ENCODE measurements at regions of chr20 and their contacts with region 1.

Region 1: DNA sequence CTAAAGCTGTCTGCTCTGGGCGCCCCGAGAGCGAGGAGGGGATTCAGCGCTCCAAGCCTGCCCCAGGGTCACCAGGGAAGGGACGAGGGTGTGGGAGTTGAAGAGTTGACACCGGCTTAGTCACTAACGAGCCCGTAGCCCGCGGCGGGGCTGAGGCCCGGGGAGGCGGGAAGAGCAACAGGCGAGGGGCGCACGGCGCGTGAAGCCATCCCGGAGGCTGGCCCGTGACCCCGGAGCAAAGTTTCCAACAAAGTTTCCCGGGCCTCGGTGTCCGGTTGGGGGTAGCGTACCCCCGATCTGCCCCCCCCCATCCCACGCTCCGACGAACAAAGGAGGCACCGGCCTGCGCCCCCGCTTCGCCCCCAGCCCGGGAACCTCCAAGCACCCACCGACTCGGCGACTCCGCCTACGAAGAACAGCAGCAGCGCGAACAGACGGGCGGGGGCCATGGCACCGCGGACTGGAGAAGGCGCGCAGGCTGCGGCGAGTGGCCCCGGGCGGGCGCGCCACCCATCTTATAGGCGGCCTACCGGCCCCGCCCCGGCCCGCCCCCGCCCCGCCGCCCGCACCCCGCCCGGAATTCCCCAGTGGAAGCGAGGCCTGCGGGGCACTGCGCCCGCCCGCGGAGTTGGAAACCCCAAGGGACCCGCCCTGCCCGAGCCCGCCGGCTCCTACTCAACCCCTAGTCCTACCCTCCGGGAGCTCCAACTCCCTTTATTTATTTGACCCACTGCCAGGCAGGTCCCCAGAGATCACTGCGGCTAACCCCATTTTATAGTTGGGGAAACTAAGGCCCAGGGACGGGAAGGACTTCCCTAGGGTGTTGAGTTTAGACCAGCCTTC is at the start of gene SDC4:
- DNase-seq: peak; percentile 91
- H3K4me3 ChIP-seq: peak within 1 kb of the TSS; percentile 87 to 94 (median 90)
- H3K27ac ChIP-seq: peak within 1 kb of the TSS; percentile 94 to 99 (median 97)
- H3K4me1 ChIP-seq: peaks cover 0 to 49% (median 45%) of the 10 kb centered on the region in 4 donors
- H3K27me3 ChIP-seq: no peaks in the 10 kb centered on the region
- CTCF ChIP-seq: no peak
- EP300 ChIP-seq: no peak
- POLR2A ChIP-seq: peak; percentile 97 to 98
- total RNA-seq, gene SDC4: 79.9 to 149 (median 88.5) TPM

Region 2: DNA sequence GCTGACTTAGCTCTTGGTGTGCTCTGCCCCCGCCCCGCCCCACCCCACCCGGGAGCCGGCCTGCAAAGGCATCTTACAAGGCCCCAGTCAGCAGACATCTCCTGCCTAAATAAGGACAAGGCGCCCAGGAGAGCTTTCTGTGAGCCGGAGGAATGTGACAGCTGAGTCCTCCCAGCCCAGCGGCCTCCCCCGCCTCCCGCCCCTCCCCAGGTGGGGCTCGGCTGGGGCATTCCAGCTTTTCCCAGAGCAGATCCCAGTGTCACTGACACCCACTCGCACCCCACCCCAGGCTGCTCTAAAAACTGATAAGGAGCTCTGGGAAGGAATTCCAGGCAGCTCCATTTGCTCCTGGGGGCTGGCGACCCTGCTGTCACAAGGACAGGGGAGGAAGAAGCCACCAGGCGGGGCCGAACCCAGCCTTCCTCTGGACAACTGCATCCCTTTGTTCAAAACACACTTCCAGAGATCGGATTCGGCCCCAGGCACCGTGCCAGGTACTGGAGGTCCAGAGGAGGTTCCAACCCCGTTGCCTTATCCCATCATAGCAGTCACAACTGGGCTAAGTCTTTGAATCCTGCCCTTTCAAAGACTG is 1210.9 kb before region 1 on chr20:
- intact Hi-C with region 1: loop called (anchors 10 kb)
- DNase-seq: peak; percentile 94
- H3K4me3 ChIP-seq: peak overlapping the region in 2 of 4 donors; percentile 9 to 11
- H3K27ac ChIP-seq: peak overlapping the region; percentile 80 to 92 (median 92)
- H3K4me1 ChIP-seq: peaks cover 0 to 74% (median 68%) of the 10 kb centered on the region in 4 donors
- H3K27me3 ChIP-seq: no peaks in the 10 kb centered on the region
- CTCF ChIP-seq: no peak
- EP300 ChIP-seq: peak in 3 of 4 donors; percentile 34 to 79 (median 78)
- POLR2A ChIP-seq: no peak

Region 3: GRCh38 chr20:44960103-44960852 is 387.9 kb before region 1 on chr20 and contains the start of gene TOMM34:
- intact Hi-C with region 1: no loop called
- DNase-seq: peak; percentile 97
- H3K4me3 ChIP-seq: peak within 1 kb of the TSS; percentile 60 to 96 (median 80)
- H3K27ac ChIP-seq: peak within 1 kb of the TSS; percentile 80 to 90 (median 84)
- H3K4me1 ChIP-seq: peaks cover 0 to 24% (median 18%) of the 10 kb centered on the region in 4 donors
- H3K27me3 ChIP-seq: no peaks in the 10 kb centered on the region
- CTCF ChIP-seq: no peak
- EP300 ChIP-seq: no peak
- POLR2A ChIP-seq: peak; percentile 53 to 59
- total RNA-seq, gene TOMM34: 7.2 to 9.2 (median 8.3) TPM

Region 4: GRCh38 chr20:47348539-47349142 is 2000.5 kb after region 1 on chr20:
- intact Hi-C with region 1: loop called (anchors 10 kb)
- DNase-seq: no peak
- H3K4me3 ChIP-seq: no peak overlapping the region
- H3K27ac ChIP-seq: peak overlapping the region; percentile 99 to 100 (median 99)
- H3K4me1 ChIP-seq: peaks cover 0 to 84% (median 80%) of the 10 kb centered on the region in 4 donors
- H3K27me3 ChIP-seq: no peaks in the 10 kb centered on the region
- CTCF ChIP-seq: no peak
- EP300 ChIP-seq: peak in 1 of 4 donors; percentile 21
- POLR2A ChIP-seq: no peak

Measured in sigmoid colon (tissue), 7 donors.